GM23248 (cell line): ENCODE measurements at regions of chr2 and their contacts with region 1.

Region 1: DNA sequence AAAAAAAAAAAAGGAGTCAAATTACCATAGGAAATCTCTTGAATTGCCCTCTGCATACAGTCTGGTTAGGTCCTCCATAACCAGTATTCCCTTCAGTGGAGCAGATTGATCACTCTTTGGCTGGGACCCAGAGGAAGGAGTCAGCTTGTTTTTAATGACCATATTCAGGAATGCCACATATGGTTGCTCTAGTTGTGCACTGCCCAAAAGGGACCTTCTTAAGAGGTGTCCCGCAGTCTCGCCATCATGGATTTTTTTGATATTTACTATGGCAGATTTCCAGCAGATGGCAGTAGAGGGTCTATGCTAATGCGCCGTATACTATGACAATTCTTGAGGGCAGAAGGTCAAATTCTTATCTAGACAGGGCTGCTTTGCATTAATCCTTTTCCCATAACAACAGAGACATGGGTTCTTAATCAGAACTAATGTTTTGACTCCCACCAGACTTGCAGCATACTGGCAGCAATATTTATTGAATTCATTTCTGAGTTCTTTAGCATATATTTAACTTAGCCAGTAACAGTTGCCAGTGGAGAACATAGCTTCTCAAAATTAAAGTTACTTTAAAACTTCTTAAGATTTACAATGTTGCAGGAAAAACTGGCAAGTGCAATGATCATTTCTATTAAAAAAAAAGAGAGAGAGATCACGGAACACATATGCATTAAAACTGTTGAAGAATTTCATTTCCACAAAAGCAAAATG is 31.8 kb upstream of the INPP4A start:
- DNase-seq: peak; percentile 69
- H3K4me3 ChIP-seq: no peak overlapping the region
- H3K27ac ChIP-seq: no peak overlapping the region
- H3K4me1 ChIP-seq: no peaks in the 10 kb centered on the region
- H3K27me3 ChIP-seq: no peaks in the 10 kb centered on the region

Region 2: DNA sequence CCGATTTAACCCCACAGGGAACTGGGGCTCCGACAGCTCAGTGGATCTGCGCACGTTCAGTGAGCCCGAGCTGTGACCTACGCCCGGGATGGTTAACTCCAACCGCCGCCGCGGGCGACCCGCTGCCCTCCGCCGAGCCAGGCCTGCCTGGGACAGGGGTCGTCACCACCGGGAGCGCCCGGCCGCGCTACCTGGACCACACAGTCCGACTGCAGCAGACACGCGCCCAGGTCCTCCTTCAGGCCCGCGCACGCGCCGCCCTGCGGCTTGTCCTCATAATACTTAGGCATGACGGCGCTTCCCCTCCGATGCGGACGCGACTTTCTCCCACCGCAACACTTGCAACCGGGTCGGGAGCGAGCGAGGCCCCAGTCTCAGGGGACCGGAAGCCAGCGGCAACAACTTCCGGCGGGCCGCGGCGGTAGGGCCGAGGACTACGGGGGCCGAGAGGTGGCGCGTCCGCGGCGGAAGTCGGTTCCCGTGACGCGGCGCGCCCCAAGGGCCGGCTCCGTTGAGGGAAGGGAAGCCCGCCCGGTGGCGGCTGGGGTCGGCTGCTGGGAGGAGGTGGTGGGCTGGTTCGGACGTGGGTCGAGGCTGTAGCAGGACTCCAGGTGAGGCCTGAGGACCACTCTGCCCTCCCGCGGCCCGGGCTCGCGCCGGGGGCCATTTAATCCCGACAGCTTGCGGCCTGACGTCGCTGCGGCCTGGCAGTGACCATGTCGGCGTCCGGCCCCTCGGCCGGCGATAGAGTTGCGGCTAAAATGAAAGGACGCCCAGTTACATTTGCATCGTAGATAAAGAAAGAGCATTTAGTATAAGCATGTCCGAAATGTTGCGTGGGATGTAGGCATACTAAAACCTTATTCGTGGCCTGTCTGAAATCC is 195.5 kb after region 1 on chr2 and contains the starts of genes COA5 and UNC50:
- in situ Hi-C with region 1: loop called (anchors 10 kb)
- DNase-seq: peak; percentile 96
- H3K4me3 ChIP-seq: peak within 1 kb of the TSS; percentile 87
- H3K27ac ChIP-seq: peak within 1 kb of the TSS; percentile 93
- H3K4me1 ChIP-seq: peaks cover 27% of the 10 kb centered on the region
- H3K27me3 ChIP-seq: no peaks in the 10 kb centered on the region
- total RNA-seq, gene COA5: 23.8 and 32.7 TPM in 2 replicates
- total RNA-seq, gene UNC50: 46.0 and 71.8 TPM in 2 replicates

Region 3: GRCh38 chr2:98835831-98836385 is 423.0 kb after region 1 on chr2:
- in situ Hi-C with region 1: loop called (anchors 25 kb)
- DNase-seq: no peak
- H3K4me3 ChIP-seq: no peak overlapping the region
- H3K27ac ChIP-seq: no peak overlapping the region
- H3K4me1 ChIP-seq: 0 out of 2 replicates have a peak, but pooled peaks cover 7% of the 10 kb centered on the region
- H3K27me3 ChIP-seq: no peaks in the 10 kb centered on the region

Region 4: GRCh38 chr2:99066075-99066958 is 653.4 kb after region 1 on chr2:
- in situ Hi-C with region 1: loop called (anchors 25 kb)
- DNase-seq: peak; percentile 70
- H3K4me3 ChIP-seq: no peak overlapping the region
- H3K27ac ChIP-seq: no peak overlapping the region
- H3K4me1 ChIP-seq: no peaks in the 10 kb centered on the region
- H3K27me3 ChIP-seq: 0 out of 2 replicates have a peak, but pooled peaks cover 13% of the 10 kb centered on the region